ENCODE measurements at regions of chr3 and their contacts with region 1.

Region 1: GRCh38 chr3:40321818-40322217 is 12.3 kb downstream of the EIF1B start:
- DNase-seq: no peak
- H3K4me3 ChIP-seq: no peak overlapping the region
- H3K27ac ChIP-seq: no peak overlapping the region
- H3K4me1 ChIP-seq: no peaks in the 10 kb centered on the region
- H3K27me3 ChIP-seq: no peaks in the 10 kb centered on the region
- CTCF ChIP-seq: no peak
- POLR2A ChIP-seq: no peak

Region 2: GRCh38 chr3:40187945-40188344 is 133.9 kb before region 1 on chr3:
- intact Hi-C with region 1: loop called (anchors 5 kb)
- DNase-seq: no peak
- H3K4me3 ChIP-seq: no peak overlapping the region
- H3K27ac ChIP-seq: no peak overlapping the region
- H3K4me1 ChIP-seq: no peaks in the 10 kb centered on the region
- H3K27me3 ChIP-seq: no peaks in the 10 kb centered on the region
- CTCF ChIP-seq: no peak
- POLR2A ChIP-seq: no peak

Region 3: DNA sequence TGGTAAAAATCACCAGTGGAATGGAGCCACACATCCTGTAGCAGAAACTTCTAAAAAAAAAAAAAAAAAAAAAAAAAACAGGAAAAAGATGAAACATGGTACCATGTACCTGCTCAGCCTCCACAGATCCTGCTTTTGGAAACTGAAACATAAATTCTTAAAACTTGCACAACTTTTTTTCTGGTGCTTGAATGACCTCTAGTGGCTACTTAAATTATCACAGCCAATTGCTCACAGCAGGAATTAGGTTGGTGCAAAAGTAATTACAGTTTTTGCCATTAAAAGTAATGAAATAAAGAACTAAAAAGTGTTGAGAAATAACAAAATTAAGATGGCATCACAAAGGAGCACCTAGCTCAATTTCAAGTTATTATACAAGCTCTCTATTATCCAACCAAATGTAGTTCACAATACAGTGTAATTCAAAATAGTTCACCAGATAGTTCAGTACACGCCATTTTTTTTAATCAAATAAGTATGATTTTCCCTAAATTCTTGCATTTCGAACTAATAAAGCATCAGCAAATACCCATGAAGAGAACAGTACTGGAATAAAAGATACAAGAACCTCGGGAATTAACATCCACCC is 1559.5 kb after region 1 on chr3:
- intact Hi-C with region 1: loop called (anchors 10 kb)
- DNase-seq: no peak
- H3K4me3 ChIP-seq: no peak overlapping the region
- H3K27ac ChIP-seq: no peak overlapping the region
- H3K4me1 ChIP-seq: no peaks in the 10 kb centered on the region
- H3K27me3 ChIP-seq: no peaks in the 10 kb centered on the region
- CTCF ChIP-seq: peak; percentile 39 to 77 (median 59)
- POLR2A ChIP-seq: no peak

Region 4: DNA sequence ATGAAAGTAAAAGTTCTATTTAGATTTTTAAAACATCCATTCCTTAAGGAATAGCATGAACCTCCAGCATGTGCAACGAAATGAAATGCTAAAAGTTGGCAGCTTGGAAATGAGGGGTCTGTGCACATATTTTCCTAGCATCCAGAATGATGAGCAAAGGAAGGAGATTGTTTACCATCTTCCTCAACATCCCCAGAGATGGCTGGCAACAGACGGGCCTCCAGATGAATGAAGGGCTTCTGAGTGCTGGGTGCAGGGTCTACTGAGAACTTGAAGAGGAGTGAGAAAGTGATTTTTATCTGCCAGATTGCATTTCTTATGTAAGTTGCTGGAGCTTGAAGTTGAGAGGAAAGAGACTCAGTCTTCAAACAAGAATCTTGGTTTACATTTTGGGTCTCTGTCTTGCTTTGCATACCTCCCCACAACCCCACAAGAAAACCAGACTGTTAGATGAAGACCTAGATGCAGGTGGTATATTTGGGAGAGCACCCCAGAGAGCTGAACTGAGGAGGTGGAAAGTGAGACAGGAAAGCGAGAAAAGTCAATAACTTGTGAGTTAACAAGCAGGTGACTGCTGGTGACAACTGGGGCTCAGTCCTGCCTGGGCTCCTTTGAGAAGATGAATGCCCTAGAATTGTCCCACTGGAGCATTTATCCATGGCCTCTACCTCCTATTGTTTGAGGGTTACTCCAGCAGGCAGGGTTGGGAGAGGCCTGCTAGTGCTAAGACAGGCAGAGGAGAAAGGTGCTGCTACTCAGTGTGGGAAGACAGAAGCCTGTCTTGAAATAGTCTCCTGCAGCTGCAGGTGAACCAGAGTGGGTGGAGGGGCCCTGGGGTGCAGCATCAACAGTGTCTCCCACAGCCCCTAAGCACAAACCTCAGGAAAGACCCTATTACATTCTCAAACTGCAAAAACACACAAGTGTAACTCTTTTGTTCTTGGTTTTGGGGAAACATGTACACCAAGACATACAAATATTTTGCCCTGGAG is 1954.6 kb after region 1 on chr3:
- intact Hi-C with region 1: no loop called
- DNase-seq: no peak
- H3K4me3 ChIP-seq: no peak overlapping the region
- H3K27ac ChIP-seq: no peak overlapping the region
- H3K4me1 ChIP-seq: no peaks in the 10 kb centered on the region
- H3K27me3 ChIP-seq: no peaks in the 10 kb centered on the region
- CTCF ChIP-seq: no peak
- POLR2A ChIP-seq: no peak

Measured in vagina (tissue), 2 donors.